SK-N-SH (cell line): ENCODE measurements at regions of chr11 and their contacts with region 1.

Region 1: DNA sequence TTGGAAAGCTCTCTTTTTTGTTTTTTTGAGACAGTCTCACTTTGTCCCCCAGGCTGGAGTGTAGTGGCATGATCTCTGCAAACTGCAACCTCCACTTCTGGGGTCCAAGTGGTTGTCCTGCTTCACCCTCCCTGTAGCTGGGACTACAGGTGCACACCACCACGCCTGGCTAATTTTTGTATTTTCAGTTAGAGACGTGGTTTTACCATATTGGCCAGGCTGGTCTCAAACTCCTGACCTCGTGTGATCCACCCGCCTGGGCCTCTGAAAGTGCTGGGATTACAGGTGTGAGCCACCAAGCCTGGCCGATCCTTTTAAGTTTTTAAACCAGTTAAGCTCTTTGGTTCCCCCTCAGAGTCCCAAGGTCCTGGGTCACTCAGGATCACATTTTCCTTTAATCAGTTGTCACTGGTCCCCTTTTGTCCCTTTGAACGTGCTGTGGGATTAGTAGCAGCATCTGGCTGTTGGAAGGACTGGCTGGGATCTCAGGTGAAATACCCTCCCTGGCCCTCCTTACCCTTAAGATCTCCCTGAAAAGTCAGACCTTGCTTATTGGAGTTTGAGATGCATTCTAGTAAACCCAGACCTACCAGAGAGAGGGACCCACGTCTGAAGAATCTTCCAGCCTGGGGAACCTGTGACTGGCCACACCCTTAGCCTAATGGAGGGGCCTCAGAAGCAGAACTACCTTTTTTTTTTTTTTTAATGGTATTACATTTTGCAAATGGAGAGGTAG is 8.1 kb downstream of the MALAT1 start:
- DNase-seq: no peak
- H3K4me3 ChIP-seq: peak overlapping the region; percentile 84 to 87
- H3K27ac ChIP-seq: peak overlapping the region; percentile 71 to 99
- H3K4me1 ChIP-seq: peaks cover 0 to 19% of the 10 kb centered on the region in 2 experiments; a peak in 2 of 4 replicates
- H3K27me3 ChIP-seq: no peaks in the 10 kb centered on the region
- CTCF ChIP-seq: no peak
- EP300 ChIP-seq: no peak
- RAD21 ChIP-seq: no peak

Region 2: GRCh38 chr11:65150509-65151271 is 356.2 kb before region 1 on chr11:
- CTCF ChIA-PET with region 1: no interaction called
- POLR2A ChIA-PET with region 1: no interaction called
- DNase-seq: peak; percentile 82
- H3K4me3 ChIP-seq: no peak overlapping the region
- H3K27ac ChIP-seq: peak overlapping the region; percentile 47 to 76
- H3K4me1 ChIP-seq: peaks cover 11% of the 10 kb centered on the region in 2 experiments; a peak in 2 of 4 replicates
- H3K27me3 ChIP-seq: no peaks in the 10 kb centered on the region
- CTCF ChIP-seq: no peak
- EP300 ChIP-seq: no peak
- RAD21 ChIP-seq: peak; percentile 28

Region 3: DNA sequence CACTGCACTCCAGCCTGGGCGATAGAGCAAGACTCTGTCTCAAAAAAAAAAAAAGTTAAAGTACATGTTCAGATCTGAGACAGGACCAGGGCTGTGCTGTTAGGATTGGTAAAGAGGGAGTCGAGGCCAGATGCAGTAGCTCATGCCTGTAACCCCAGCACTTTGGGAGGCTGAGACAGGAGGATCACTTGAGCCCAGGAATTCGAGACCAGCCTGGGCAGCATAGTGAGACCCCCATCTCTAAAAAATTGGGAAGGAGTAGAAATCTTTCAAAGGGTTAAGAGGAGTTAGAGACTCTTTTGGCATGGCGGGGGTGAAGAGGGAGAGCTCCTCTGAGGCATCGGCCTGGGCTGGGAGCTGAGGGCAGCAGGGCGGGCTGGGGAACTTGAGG is 136.3 kb before region 1 on chr11:
- CTCF ChIA-PET with region 1: interaction called, 11 read pairs
- POLR2A ChIA-PET with region 1: interaction called, 7 read pairs
- DNase-seq: no peak
- H3K4me3 ChIP-seq: no peak overlapping the region
- H3K27ac ChIP-seq: peak overlapping the region in 1 of 2 experiments; percentile 79; a peak in 2 of 4 replicates
- H3K4me1 ChIP-seq: no peaks in the 10 kb centered on the region; a peak in 2 of 4 replicates
- H3K27me3 ChIP-seq: no peaks in the 10 kb centered on the region
- CTCF ChIP-seq: no peak
- EP300 ChIP-seq: no peak
- RAD21 ChIP-seq: no peak

Region 4: GRCh38 chr11:65382033-65382807 is 124.7 kb before region 1 on chr11 and contains the start of gene SLC25A45:
- CTCF ChIA-PET with region 1: interaction called, 12 read pairs
- POLR2A ChIA-PET with region 1: interaction called, 6 read pairs
- DNase-seq: peak; percentile 89
- H3K4me3 ChIP-seq: peak within 1 kb of the TSS; percentile 44 to 61
- H3K27ac ChIP-seq: peak within 1 kb of the TSS; percentile 98 to 99
- H3K4me1 ChIP-seq: peaks cover 29 to 49% of the 10 kb centered on the region in 2 experiments; a peak in 3 of 4 replicates
- H3K27me3 ChIP-seq: no peaks in the 10 kb centered on the region
- CTCF ChIP-seq: peak; percentile 75
- EP300 ChIP-seq: peak; percentile 7 to 70; a peak in 1 of 4 replicates
- RAD21 ChIP-seq: peak; percentile 71
- polyA plus RNA-seq, gene SLC25A45: 3.1 and 3.6 TPM in 2 replicates

Region 5: GRCh38 chr11:65442856-65443331 is 64.0 kb before region 1 on chr11:
- CTCF ChIA-PET with region 1: interaction called, 5 read pairs
- POLR2A ChIA-PET with region 1: interaction called, 10 read pairs
- DNase-seq: no peak
- H3K4me3 ChIP-seq: no peak overlapping the region
- H3K27ac ChIP-seq: peak overlapping the region; percentile 53 to 100
- H3K4me1 ChIP-seq: peaks cover 0 to 19% of the 10 kb centered on the region in 2 experiments; a peak in 2 of 4 replicates
- H3K27me3 ChIP-seq: no peaks in the 10 kb centered on the region
- CTCF ChIP-seq: no peak
- EP300 ChIP-seq: no peak
- RAD21 ChIP-seq: no peak

Region 6: GRCh38 chr11:65471410-65471762 is 35.6 kb before region 1 on chr11:
- CTCF ChIA-PET with region 1: interaction called, 79 read pairs
- POLR2A ChIA-PET with region 1: interaction called, 591 read pairs
- DNase-seq: peak; percentile 70
- H3K4me3 ChIP-seq: peak overlapping the region; percentile 12 to 47; a peak in 3 of 4 replicates
- H3K27ac ChIP-seq: peak overlapping the region; percentile 68 to 99
- H3K4me1 ChIP-seq: peaks cover 10 to 16% of the 10 kb centered on the region in 2 experiments; a peak in 3 of 4 replicates
- H3K27me3 ChIP-seq: no peaks in the 10 kb centered on the region
- CTCF ChIP-seq: peak; percentile 72
- EP300 ChIP-seq: no peak
- RAD21 ChIP-seq: peak; percentile 75

Region 7: GRCh38 chr11:65477149-65477965 is 29.6 kb before region 1 on chr11:
- CTCF ChIA-PET with region 1: interaction called, 79 read pairs
- POLR2A ChIA-PET with region 1: interaction called, 591 read pairs
- DNase-seq: peak; percentile 98
- H3K4me3 ChIP-seq: peak overlapping the region; percentile 67 to 70
- H3K27ac ChIP-seq: peak overlapping the region; percentile 91 to 100
- H3K4me1 ChIP-seq: peaks cover 30 to 38% of the 10 kb centered on the region in 2 experiments
- H3K27me3 ChIP-seq: no peaks in the 10 kb centered on the region
- CTCF ChIP-seq: no peak
- EP300 ChIP-seq: peak; percentile 25 to 60; a peak in 2 of 4 replicates
- RAD21 ChIP-seq: no peak

Region 8: GRCh38 chr11:65524741-65525545 is 18.0 kb after region 1 on chr11 and contains the start of gene SCYL1:
- CTCF ChIA-PET with region 1: interaction called, 12 read pairs
- POLR2A ChIA-PET with region 1: interaction called, 10 read pairs
- DNase-seq: peak; percentile 99
- H3K4me3 ChIP-seq: peak within 1 kb of the TSS; percentile 78 to 81
- H3K27ac ChIP-seq: peak within 1 kb of the TSS; percentile 56 to 62; a peak in 2 of 4 replicates
- H3K4me1 ChIP-seq: peaks cover 5 to 18% of the 10 kb centered on the region in 2 experiments; a peak in 3 of 4 replicates
- H3K27me3 ChIP-seq: no peaks in the 10 kb centered on the region
- CTCF ChIP-seq: no peak
- EP300 ChIP-seq: no peak; a peak in 1 of 4 replicates
- RAD21 ChIP-seq: no peak
- polyA plus RNA-seq, gene SCYL1: 76.7 and 79.9 TPM in 2 replicates